Activated B cell treated with CpG ODN at 0.5 μM for 24 hours (primary cell): ENCODE measurements at regions of chr22 and their contacts with region 1.

Region 1: GRCh38 chr22:36977947-36978660 is 41.1 kb downstream of the TST start:
- DNase-seq: peak; percentile 80
- ATAC-seq: peak; percentile 85
- H3K4me3 Mint-ChIP-seq: peak overlapping the region; percentile 90
- H3K27ac Mint-ChIP-seq: peak overlapping the region; percentile 93
- H3K4me1 Mint-ChIP-seq: peaks cover 12% of the 10 kb centered on the region
- H3K27me3 Mint-ChIP-seq: peaks cover 11% of the 10 kb centered on the region
- CTCF ChIP-seq: peak; percentile 92

Region 2: DNA sequence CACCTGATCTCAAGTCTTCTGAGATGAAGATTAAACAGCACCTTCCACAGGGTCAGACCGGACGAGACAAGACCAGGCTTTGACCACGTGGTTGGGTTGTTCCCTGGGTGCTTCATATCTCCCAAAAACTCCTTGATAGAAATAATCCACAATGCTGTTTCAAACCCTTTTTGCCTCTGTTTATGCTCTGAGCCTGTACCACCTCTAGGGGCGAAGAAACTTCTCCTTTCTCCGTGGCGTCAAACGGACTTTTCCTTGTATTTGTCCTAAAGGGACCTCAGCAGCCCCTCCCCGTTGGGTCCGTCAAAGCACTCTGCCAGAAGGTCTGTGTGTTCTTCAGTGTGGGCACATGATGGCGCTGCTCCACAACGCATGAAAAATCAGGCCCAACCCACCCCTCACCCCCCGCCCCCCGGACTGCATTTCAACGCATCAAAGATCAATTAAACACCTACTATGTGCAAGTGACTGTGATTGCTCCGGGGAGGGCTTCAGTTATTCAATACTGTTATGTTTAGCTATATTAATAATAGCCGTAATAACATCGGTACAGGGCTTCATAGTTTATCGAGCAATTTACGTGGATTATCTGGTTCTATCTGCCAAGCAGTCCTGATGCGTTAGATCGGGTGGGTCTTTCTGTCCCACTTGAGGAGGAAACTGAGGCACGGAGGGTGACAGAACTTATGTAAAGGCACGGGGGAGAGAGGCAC is 431.9 kb before region 1 on chr22:
- CTCF ChIA-PET with region 1: interaction called, 7 read pairs
- POLR2A ChIA-PET with region 1: no interaction called
- intact Hi-C with region 1: loop called (anchors 1 kb)
- DNase-seq: no peak
- ATAC-seq: peak; percentile 82
- H3K4me3 Mint-ChIP-seq: no peak overlapping the region
- H3K27ac Mint-ChIP-seq: no peak overlapping the region
- H3K4me1 Mint-ChIP-seq: peaks cover 28% of the 10 kb centered on the region
- H3K27me3 Mint-ChIP-seq: no peaks in the 10 kb centered on the region
- CTCF ChIP-seq: no peak

Region 3: GRCh38 chr22:36775964-36776669 is 202.0 kb before region 1 on chr22 and contains the start of gene IFT27:
- CTCF ChIA-PET with region 1: interaction called, 14 read pairs
- POLR2A ChIA-PET with region 1: interaction called, 12 read pairs
- intact Hi-C with region 1: loop called (anchors 1 kb)
- DNase-seq: peak; percentile 81
- ATAC-seq: peak; percentile 89
- H3K4me3 Mint-ChIP-seq: peak within 1 kb of the TSS; percentile 88
- H3K27ac Mint-ChIP-seq: peak within 1 kb of the TSS; percentile 89
- H3K4me1 Mint-ChIP-seq: peaks cover 14% of the 10 kb centered on the region
- H3K27me3 Mint-ChIP-seq: no peaks in the 10 kb centered on the region
- CTCF ChIP-seq: no peak
- total RNA-seq, gene IFT27: 26.2 and 32.7 TPM in 2 replicates

Region 4: GRCh38 chr22:36884349-36885117 is 93.6 kb before region 1 on chr22:
- CTCF ChIA-PET with region 1: no interaction called
- POLR2A ChIA-PET with region 1: no interaction called
- intact Hi-C with region 1: no loop called
- DNase-seq: no peak
- ATAC-seq: no peak
- H3K4me3 Mint-ChIP-seq: no peak overlapping the region
- H3K27ac Mint-ChIP-seq: no peak overlapping the region
- H3K4me1 Mint-ChIP-seq: peaks cover 8% of the 10 kb centered on the region
- H3K27me3 Mint-ChIP-seq: peaks cover 3% of the 10 kb centered on the region
- CTCF ChIP-seq: no peak

Region 5: GRCh38 chr22:36921309-36922104 is 56.6 kb before region 1 on chr22:
- CTCF ChIA-PET with region 1: no interaction called
- POLR2A ChIA-PET with region 1: no interaction called
- intact Hi-C with region 1: loop called (anchors 10 kb)
- DNase-seq: no peak
- ATAC-seq: peak; percentile 89
- H3K4me3 Mint-ChIP-seq: peak overlapping the region; percentile 46
- H3K27ac Mint-ChIP-seq: peak overlapping the region; percentile 57
- H3K4me1 Mint-ChIP-seq: peaks cover 42% of the 10 kb centered on the region
- H3K27me3 Mint-ChIP-seq: no peaks in the 10 kb centered on the region
- CTCF ChIP-seq: no peak

Region 6: GRCh38 chr22:37043828-37044538 is 65.9 kb after region 1 on chr22:
- CTCF ChIA-PET with region 1: no interaction called
- POLR2A ChIA-PET with region 1: no interaction called
- intact Hi-C with region 1: loop called (anchors 2 kb)
- DNase-seq: peak; percentile 52
- ATAC-seq: peak; percentile 97
- H3K4me3 Mint-ChIP-seq: no peak overlapping the region
- H3K27ac Mint-ChIP-seq: no peak overlapping the region
- H3K4me1 Mint-ChIP-seq: peaks cover 12% of the 10 kb centered on the region
- H3K27me3 Mint-ChIP-seq: peaks cover 14% of the 10 kb centered on the region
- CTCF ChIP-seq: peak; percentile 41